ENCODE measurements at regions of chr2 and their contacts with region 1.

Region 1: GRCh38 chr2:189674374-189675112 is at the start of gene ANKAR:
- DNase-seq: peak; percentile 89
- ATAC-seq: peak; percentile 97
- H3K4me3 Mint-ChIP-seq: peak within 1 kb of the TSS; percentile 96
- H3K27ac Mint-ChIP-seq: peak within 1 kb of the TSS; percentile 99
- H3K4me1 Mint-ChIP-seq: peaks cover 38% of the 10 kb centered on the region
- H3K27me3 Mint-ChIP-seq: no peaks in the 10 kb centered on the region
- CTCF ChIP-seq: peak; percentile 67
- total RNA-seq, gene ANKAR: 13.1 and 14.5 TPM in 2 replicates

Region 2: DNA sequence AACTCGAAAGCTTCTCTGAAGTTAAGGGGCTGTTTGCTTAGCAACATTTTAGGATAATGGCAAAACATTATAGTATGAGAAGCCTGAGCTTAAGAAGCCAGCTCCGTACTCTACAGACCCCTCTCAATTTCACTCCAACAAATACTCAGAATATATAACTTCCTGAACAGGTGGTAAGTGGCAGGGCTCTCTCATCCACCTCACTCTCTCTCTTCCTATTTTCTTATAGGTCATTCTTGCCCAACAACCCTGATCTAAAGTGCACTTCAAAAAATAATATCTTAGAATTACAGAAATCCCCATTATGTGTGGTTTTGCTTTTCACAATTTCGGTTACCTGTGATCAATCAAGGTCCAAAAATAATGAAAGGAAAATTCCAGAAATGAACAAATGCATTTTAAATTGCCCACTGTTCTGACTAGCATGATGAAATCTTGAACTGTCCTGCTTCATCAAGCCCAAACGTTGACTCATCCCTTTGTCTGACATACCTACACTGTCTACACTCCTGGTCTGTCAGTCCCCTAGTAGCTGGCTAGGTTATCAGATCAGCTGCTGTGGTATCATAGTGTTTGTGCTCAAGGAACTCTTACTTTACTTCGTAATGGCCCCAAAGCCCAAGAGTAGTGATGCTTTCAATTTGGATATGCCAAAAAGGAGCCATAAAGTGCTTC is 372.1 kb before region 1 on chr2:
- CTCF ChIA-PET with region 1: no interaction called
- POLR2A ChIA-PET with region 1: no interaction called
- intact Hi-C with region 1: no loop called
- DNase-seq: no peak
- ATAC-seq: no peak
- H3K4me3 Mint-ChIP-seq: no peak overlapping the region
- H3K27ac Mint-ChIP-seq: no peak overlapping the region
- H3K4me1 Mint-ChIP-seq: no peaks in the 10 kb centered on the region
- H3K27me3 Mint-ChIP-seq: no peaks in the 10 kb centered on the region
- CTCF ChIP-seq: no peak

Region 3: GRCh38 chr2:189498205-189498604 is 176.3 kb before region 1 on chr2:
- CTCF ChIA-PET with region 1: no interaction called
- POLR2A ChIA-PET with region 1: no interaction called
- intact Hi-C with region 1: no loop called
- DNase-seq: no peak
- ATAC-seq: no peak
- H3K4me3 Mint-ChIP-seq: no peak overlapping the region
- H3K27ac Mint-ChIP-seq: no peak overlapping the region
- H3K4me1 Mint-ChIP-seq: no peaks in the 10 kb centered on the region
- H3K27me3 Mint-ChIP-seq: peaks cover 10% of the 10 kb centered on the region
- CTCF ChIP-seq: no peak

Region 4: GRCh38 chr2:189624648-189625355 is 49.7 kb before region 1 on chr2:
- CTCF ChIA-PET with region 1: no interaction called
- POLR2A ChIA-PET with region 1: no interaction called
- intact Hi-C with region 1: no loop called
- DNase-seq: no peak
- ATAC-seq: no peak
- H3K4me3 Mint-ChIP-seq: no peak overlapping the region
- H3K27ac Mint-ChIP-seq: no peak overlapping the region
- H3K4me1 Mint-ChIP-seq: no peaks in the 10 kb centered on the region
- H3K27me3 Mint-ChIP-seq: peaks cover 10% of the 10 kb centered on the region
- CTCF ChIP-seq: no peak

Region 5: DNA sequence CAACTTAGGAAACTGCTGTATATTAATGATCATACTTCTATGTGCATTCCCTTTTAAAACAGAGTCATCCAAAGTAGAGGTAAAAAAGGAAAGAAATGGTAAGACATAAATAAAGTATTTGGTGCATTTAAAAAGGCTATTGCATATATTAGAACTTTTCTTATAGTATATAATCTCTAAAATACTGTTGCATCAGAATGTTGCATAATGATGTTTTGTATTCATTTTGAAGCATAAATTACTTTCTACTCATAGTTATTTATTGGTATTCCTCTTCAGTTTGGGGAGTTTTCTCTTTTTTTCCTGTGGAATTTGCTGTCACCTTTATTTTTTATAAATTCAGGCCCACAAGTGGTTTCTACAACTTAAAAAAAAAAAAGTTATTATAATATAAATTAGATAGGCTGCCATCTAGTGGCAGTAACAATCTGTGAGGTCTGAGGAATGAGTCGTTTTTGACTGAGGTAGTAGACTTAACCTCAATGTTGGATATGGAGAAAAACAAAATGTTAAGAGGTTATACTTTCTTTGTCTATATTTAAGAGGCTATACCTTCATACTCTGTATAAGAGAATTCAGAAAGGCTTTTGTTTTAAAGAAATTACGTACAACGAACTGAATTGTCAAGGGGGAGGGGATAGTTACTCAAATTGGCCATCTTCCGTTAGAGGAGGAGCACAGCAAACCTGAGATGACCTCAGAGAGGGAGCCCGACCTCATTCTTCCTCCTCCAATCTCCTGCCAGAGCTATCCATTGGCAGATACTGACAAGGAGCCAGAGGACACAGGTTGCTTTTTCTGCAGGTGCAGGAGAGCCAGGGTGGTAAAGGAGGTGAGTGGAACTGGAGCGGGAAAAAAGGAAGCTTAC is 23.7 kb after region 1 on chr2:
- CTCF ChIA-PET with region 1: interaction called, 10 read pairs
- POLR2A ChIA-PET with region 1: interaction called, 3 read pairs
- intact Hi-C with region 1: loop called (anchors 1 kb)
- DNase-seq: no peak
- ATAC-seq: peak; percentile 58
- H3K4me3 Mint-ChIP-seq: no peak overlapping the region
- H3K27ac Mint-ChIP-seq: no peak overlapping the region
- H3K4me1 Mint-ChIP-seq: peaks cover 2% of the 10 kb centered on the region
- H3K27me3 Mint-ChIP-seq: no peaks in the 10 kb centered on the region
- CTCF ChIP-seq: no peak

Region 6: DNA sequence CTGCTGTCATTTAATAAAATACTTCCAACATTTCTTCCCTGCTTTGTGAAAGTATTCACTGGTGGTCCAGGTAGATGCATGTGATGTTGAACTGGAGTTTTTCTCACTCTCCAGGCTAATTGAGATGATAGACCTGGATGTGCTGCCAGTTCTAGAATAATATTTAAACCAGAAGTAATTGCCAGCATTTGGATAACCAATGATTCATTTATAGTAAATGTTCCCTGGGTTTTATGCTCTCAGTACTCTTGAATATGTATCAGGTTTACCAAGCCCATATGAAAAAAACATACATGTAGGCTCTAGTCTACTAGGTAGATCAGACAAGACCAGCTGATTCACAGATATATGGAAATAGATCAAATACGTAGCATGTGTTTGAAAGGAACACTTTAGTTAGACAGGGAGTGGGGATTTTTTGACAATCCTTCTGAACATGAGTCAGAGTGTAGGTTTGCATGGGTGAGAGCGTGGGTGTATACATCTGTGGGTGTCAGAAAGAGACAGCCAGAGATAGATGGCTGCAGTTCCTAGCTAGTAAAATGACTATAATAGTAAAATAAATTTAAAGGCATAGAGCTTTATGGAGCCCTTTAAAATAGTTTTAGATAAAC is 1089.5 kb after region 1 on chr2:
- CTCF ChIA-PET with region 1: no interaction called
- POLR2A ChIA-PET with region 1: no interaction called
- intact Hi-C with region 1: no loop called
- DNase-seq: no peak
- ATAC-seq: peak; percentile 28
- H3K4me3 Mint-ChIP-seq: no peak overlapping the region
- H3K27ac Mint-ChIP-seq: no peak overlapping the region
- H3K4me1 Mint-ChIP-seq: no peaks in the 10 kb centered on the region
- H3K27me3 Mint-ChIP-seq: peaks cover 4% of the 10 kb centered on the region
- CTCF ChIP-seq: no peak

Measured in activated B cell treated with CpG ODN at 0.5 μM for 24 hours (primary cell).